CD8-positive, alpha-beta T cell (primary cell): ENCODE measurements at regions of chr5 and their contacts with region 1.

Region 1: DNA sequence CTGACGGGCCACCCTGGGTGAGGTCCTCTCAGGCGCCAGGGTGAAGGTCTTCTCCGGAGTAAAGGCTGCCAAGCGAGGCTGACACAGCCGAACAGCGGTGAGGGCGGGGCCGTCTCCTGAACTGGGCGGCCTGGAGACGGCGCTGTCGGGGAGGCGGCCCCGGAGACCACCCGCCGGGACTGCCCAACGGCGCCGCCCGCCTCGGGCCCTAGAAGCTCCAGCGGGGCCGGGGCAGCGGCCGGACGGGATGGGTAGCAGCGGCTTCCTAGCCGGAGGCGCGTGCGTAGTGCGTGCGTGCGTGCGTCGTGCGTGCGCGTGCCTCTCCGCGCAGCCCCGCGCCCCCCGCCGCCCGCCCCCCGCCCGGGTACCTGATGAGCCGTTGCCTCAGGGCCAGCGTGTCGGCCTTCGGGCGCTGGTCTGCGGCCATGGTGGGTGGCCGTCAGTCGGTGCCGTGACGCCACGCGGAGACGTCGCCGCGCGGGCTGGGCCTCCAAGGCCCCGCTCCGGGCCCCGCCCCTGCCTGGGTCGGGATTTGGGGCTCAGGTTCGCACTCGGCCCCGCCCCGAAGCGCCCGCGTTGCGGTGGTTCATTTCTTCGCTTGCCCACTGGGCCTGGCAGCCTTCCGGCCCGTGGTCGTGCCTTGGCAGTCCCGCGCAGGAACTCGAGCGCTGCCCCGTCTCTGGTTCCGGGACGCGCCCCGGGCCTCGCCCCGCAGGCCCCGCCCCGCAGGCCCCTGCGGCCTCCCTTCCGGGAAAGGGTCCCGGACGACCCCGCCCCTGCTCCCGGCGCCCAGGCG is at the start of gene PHYKPL:
- DNase-seq: peak; percentile 33 to 83 (median 65)
- ATAC-seq: peak; percentile 65
- H3K4me3 ChIP-seq: peak within 1 kb of the TSS; percentile 87 to 89
- H3K4me3 Mint-ChIP-seq: peak within 1 kb of the TSS; percentile 81
- H3K27ac ChIP-seq: peak within 1 kb of the TSS; percentile 76 to 78
- H3K27ac Mint-ChIP-seq: peak within 1 kb of the TSS; percentile 87
- H3K4me1 ChIP-seq: peaks cover 61% of the 10 kb centered on the region
- H3K4me1 Mint-ChIP-seq: peaks cover 76% of the 10 kb centered on the region
- H3K27me3 ChIP-seq: no peaks in the 10 kb centered on the region
- H3K27me3 Mint-ChIP-seq: no peaks in the 10 kb centered on the region
- CTCF ChIP-seq: no peak
- total RNA-seq, gene PHYKPL: 82.8 to 90.3 TPM

Region 2: DNA sequence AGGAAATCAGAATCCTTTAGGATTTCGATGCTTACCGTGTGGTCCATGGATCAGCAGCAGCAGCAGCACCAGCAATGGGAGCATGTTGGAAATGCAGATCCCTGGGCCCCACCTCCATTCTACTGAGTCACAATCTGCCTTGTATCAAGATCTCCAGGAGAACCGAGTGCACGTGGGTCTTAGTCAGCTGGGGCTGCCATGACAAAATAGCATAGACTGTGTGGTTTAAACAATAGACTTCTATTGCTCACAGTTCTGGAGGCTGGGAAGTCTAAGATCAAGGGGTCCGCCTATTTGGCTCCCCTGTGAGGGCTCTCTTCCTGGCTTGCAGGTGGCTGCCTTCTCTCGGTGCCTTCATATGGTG is 235.0 kb before region 1 on chr5:
- CTCF ChIA-PET with region 1: no interaction called
- POLR2A ChIA-PET with region 1: no interaction called
- intact Hi-C with region 1: no loop called
- DNase-seq: no peak
- ATAC-seq: no peak
- H3K4me3 ChIP-seq: no peak overlapping the region
- H3K4me3 Mint-ChIP-seq: no peak overlapping the region
- H3K27ac ChIP-seq: no peak overlapping the region
- H3K27ac Mint-ChIP-seq: no peak overlapping the region
- H3K4me1 ChIP-seq: no peaks in the 10 kb centered on the region
- H3K4me1 Mint-ChIP-seq: no peaks in the 10 kb centered on the region
- H3K27me3 ChIP-seq: peaks cover 3 to 8% of the 10 kb centered on the region in 2 experiments
- H3K27me3 Mint-ChIP-seq: peaks cover 18% of the 10 kb centered on the region
- CTCF ChIP-seq: no peak

Region 3: DNA sequence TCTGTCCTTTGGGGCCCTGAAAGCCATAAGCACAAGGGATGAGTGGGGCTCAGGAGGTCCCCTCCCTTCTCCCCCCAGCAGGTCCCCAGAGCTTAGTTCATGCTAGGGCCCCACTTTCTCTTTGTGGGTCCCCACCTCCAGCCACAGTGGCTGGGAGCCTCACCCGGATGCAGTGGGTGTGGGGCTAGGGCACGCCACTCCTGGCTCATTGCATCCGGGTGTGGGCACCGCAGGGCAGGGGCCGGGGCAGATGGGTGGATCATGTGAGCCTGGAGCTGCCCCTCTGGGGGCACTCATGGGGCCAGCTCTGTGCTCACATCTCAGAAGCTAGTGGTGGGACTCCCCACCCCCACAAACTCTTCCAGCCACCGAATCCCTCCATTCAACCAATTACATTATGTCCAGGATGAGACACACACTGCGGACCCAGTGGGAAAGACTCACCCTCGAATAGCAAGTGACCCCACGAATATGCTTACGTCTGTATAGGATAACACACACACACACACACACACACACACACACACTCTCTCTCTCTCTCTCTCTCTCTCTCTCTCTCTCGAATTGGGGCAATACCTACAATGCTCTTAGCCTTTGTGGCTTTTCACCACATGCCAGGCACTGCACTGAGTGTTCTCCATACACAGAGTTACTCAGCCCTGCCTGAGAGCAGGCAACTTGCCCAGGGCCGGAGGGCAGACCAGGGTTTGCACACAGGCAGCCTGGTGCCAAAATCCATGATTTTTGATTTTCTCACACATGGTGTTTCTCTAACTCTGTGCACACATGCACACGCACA is 17.1 kb after region 1 on chr5:
- CTCF ChIA-PET with region 1: interaction called, 30 read pairs
- POLR2A ChIA-PET with region 1: no interaction called
- intact Hi-C with region 1: loop called in 1 of 2 experiments (anchors 2 kb)
- DNase-seq: peak in 8 of 9 experiments; percentile 18 to 81 (median 62)
- ATAC-seq: peak; percentile 81
- H3K4me3 ChIP-seq: peak overlapping the region; percentile 10 to 12
- H3K4me3 Mint-ChIP-seq: peak overlapping the region; percentile 55
- H3K27ac ChIP-seq: peak overlapping the region; percentile 20 to 34
- H3K27ac Mint-ChIP-seq: peak overlapping the region; percentile 67
- H3K4me1 ChIP-seq: peaks cover 53% of the 10 kb centered on the region
- H3K4me1 Mint-ChIP-seq: peaks cover 41% of the 10 kb centered on the region
- H3K27me3 ChIP-seq: no peaks in the 10 kb centered on the region
- H3K27me3 Mint-ChIP-seq: no peaks in the 10 kb centered on the region
- CTCF ChIP-seq: no peak

Region 4: GRCh38 chr5:178261666-178262606 is 29.6 kb after region 1 on chr5:
- CTCF ChIA-PET with region 1: no interaction called
- POLR2A ChIA-PET with region 1: no interaction called
- intact Hi-C with region 1: no loop called
- DNase-seq: no peak
- ATAC-seq: no peak
- H3K4me3 ChIP-seq: no peak overlapping the region
- H3K4me3 Mint-ChIP-seq: no peak overlapping the region
- H3K27ac ChIP-seq: no peak overlapping the region
- H3K27ac Mint-ChIP-seq: no peak overlapping the region
- H3K4me1 ChIP-seq: no peaks in the 10 kb centered on the region
- H3K4me1 Mint-ChIP-seq: no peaks in the 10 kb centered on the region
- H3K27me3 ChIP-seq: no peaks in the 10 kb centered on the region
- H3K27me3 Mint-ChIP-seq: no peaks in the 10 kb centered on the region
- CTCF ChIP-seq: no peak

Region 5: GRCh38 chr5:178461004-178461730 is 228.8 kb after region 1 on chr5:
- CTCF ChIA-PET with region 1: interaction called, 5 read pairs
- POLR2A ChIA-PET with region 1: no interaction called
- intact Hi-C with region 1: loop called in 1 of 2 experiments (anchors 10 kb)
- DNase-seq: peak; percentile 11 to 57 (median 35)
- ATAC-seq: no peak
- H3K4me3 ChIP-seq: no peak overlapping the region
- H3K4me3 Mint-ChIP-seq: no peak overlapping the region
- H3K27ac ChIP-seq: no peak overlapping the region
- H3K27ac Mint-ChIP-seq: no peak overlapping the region
- H3K4me1 ChIP-seq: no peaks in the 10 kb centered on the region
- H3K4me1 Mint-ChIP-seq: no peaks in the 10 kb centered on the region
- H3K27me3 ChIP-seq: peaks cover 0 to 3% of the 10 kb centered on the region in 2 experiments
- H3K27me3 Mint-ChIP-seq: no peaks in the 10 kb centered on the region
- CTCF ChIP-seq: peak; percentile 52

Region 6: GRCh38 chr5:178590141-178590923 is 358.0 kb after region 1 on chr5 and contains the start of gene COL23A1:
- CTCF ChIA-PET with region 1: interaction called, 5 read pairs
- POLR2A ChIA-PET with region 1: no interaction called
- intact Hi-C with region 1: loop called (anchors 1 to 2 kb)
- DNase-seq: peak in 8 of 9 experiments; percentile 20 to 70 (median 55)
- ATAC-seq: peak; percentile 85
- H3K4me3 ChIP-seq: peak within 1 kb of the TSS; percentile 12 to 38
- H3K4me3 Mint-ChIP-seq: peak within 1 kb of the TSS; percentile 81
- H3K27ac ChIP-seq: no peak within 1 kb of the TSS
- H3K27ac Mint-ChIP-seq: no peak within 1 kb of the TSS
- H3K4me1 ChIP-seq: peaks cover 12% of the 10 kb centered on the region
- H3K4me1 Mint-ChIP-seq: peaks cover 6% of the 10 kb centered on the region
- H3K27me3 ChIP-seq: peaks cover 5 to 13% of the 10 kb centered on the region in 2 experiments
- H3K27me3 Mint-ChIP-seq: peaks cover 45% of the 10 kb centered on the region
- CTCF ChIP-seq: peak; percentile 62
- total RNA-seq, gene COL23A1: not detected

Region 7: DNA sequence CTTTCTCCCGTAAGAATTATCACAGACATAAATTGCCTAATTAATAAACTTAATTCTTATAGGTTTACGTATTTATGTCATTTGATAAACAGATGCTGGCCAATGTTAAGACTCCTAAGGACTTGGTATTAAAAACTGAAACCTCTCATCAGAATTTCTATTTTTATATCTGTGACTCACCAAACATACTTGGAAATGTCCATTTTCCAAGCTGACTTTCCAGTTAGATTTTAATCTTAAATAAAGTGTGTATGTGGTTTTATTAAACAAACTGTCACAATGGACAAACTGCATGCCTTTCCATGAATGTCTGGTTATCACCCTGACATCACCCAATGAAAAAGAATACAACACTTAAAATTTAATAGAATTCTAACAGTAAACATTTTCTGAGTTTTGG is 370.4 kb after region 1 on chr5:
- CTCF ChIA-PET with region 1: no interaction called
- POLR2A ChIA-PET with region 1: no interaction called
- intact Hi-C with region 1: no loop called
- DNase-seq: no peak
- ATAC-seq: no peak
- H3K4me3 ChIP-seq: no peak overlapping the region
- H3K4me3 Mint-ChIP-seq: no peak overlapping the region
- H3K27ac ChIP-seq: no peak overlapping the region
- H3K27ac Mint-ChIP-seq: no peak overlapping the region
- H3K4me1 ChIP-seq: no peaks in the 10 kb centered on the region
- H3K4me1 Mint-ChIP-seq: peaks cover 8% of the 10 kb centered on the region
- H3K27me3 ChIP-seq: no peaks in the 10 kb centered on the region
- H3K27me3 Mint-ChIP-seq: no peaks in the 10 kb centered on the region
- CTCF ChIP-seq: no peak

Region 8: DNA sequence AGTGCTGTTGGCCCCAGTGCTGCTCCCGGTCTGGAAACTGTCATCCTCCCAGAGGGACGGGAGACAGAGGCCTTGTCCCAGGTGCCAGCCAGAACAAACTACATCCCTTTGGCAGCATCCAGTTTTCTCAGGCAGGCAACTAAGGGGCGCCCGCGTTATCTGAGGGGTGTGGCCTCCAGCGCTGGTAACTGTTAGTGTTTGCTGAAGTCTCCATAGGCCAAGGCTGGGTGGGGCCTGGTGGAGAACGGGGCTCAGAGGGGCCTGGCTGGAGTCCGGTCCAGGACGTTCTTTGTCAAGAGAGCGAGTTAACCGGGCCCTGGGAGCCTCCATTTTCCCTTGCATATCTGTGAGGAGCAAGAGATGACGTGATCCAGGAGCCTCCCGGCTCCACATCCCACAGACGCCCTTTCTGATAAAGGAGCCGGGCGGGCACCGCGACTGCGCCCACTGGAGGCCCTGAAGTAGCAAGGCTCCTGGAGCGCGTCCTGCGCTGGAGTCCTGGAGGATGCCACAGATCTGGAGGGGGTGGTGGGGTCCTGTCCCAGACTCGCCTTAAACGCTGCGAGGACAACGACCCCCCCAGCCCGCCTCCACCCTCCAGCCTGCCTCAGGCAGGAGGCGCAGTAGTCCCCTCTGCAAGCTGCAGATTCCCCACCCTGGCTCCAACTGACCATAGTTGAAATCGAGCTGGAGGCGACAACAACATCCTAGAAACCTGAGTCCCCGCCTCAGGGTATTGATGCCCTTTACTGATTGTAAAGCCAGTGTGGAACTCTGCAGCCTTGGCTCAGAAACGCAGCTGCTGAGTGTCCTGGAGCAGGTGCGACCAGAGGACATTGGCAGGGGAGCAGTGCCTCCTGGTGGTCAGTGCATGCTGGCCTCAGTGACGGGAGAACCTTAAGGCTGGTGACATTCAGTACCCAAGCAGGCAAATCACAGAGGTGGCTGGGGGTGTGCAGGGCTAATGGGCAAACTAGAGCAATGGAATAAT is 606.7 kb after region 1 on chr5:
- CTCF ChIA-PET with region 1: no interaction called
- POLR2A ChIA-PET with region 1: no interaction called
- intact Hi-C with region 1: loop called in 1 of 2 experiments (anchors 5 kb)
- DNase-seq: peak; percentile 6 to 65 (median 45)
- ATAC-seq: peak; percentile 63
- H3K4me3 ChIP-seq: no peak overlapping the region
- H3K4me3 Mint-ChIP-seq: no peak overlapping the region
- H3K27ac ChIP-seq: no peak overlapping the region
- H3K27ac Mint-ChIP-seq: no peak overlapping the region
- H3K4me1 ChIP-seq: no peaks in the 10 kb centered on the region
- H3K4me1 Mint-ChIP-seq: no peaks in the 10 kb centered on the region
- H3K27me3 ChIP-seq: no peaks in the 10 kb centered on the region
- H3K27me3 Mint-ChIP-seq: peaks cover 3% of the 10 kb centered on the region
- CTCF ChIP-seq: peak; percentile 20

Region 9: GRCh38 chr5:179495906-179496455 is 1263.7 kb after region 1 on chr5:
- CTCF ChIA-PET with region 1: interaction called, 4 read pairs
- POLR2A ChIA-PET with region 1: no interaction called
- intact Hi-C with region 1: loop called in 1 of 2 experiments (anchors 5 kb)
- DNase-seq: no peak
- ATAC-seq: no peak
- H3K4me3 ChIP-seq: no peak overlapping the region
- H3K4me3 Mint-ChIP-seq: no peak overlapping the region
- H3K27ac ChIP-seq: no peak overlapping the region
- H3K27ac Mint-ChIP-seq: no peak overlapping the region
- H3K4me1 ChIP-seq: no peaks in the 10 kb centered on the region
- H3K4me1 Mint-ChIP-seq: no peaks in the 10 kb centered on the region
- H3K27me3 ChIP-seq: no peaks in the 10 kb centered on the region
- H3K27me3 Mint-ChIP-seq: no peaks in the 10 kb centered on the region
- CTCF ChIP-seq: no peak